GM13977 (cell line): ENCODE measurements at regions of chr15 and their contacts with region 1.

Region 1: GRCh38 chr15:77944002-77944867 is 133.3 kb downstream of the TBC1D2B start:
- DNase-seq: peak; percentile 64
- CTCF ChIP-seq: no peak

Region 2: GRCh38 chr15:77546050-77546501 is 398.2 kb before region 1 on chr15:
- in situ Hi-C with region 1: no loop called
- DNase-seq: no peak
- CTCF ChIP-seq: no peak

Region 3: GRCh38 chr15:78739996-78740903 is 796.0 kb after region 1 on chr15:
- in situ Hi-C with region 1: loop called (anchors 10 kb)
- DNase-seq: no peak
- CTCF ChIP-seq: peak; percentile 72

Region 4: GRCh38 chr15:78761020-78761419 is 816.8 kb after region 1 on chr15:
- in situ Hi-C with region 1: no loop called
- DNase-seq: no peak
- CTCF ChIP-seq: no peak